ENCODE measurements at regions of chr4 and their contacts with region 1.

Region 1: GRCh38 chr4:86594559-86595425 is 677 bp downstream of the PTPN13 start:
- DNase-seq: no peak
- H3K4me3 Mint-ChIP-seq: peak overlapping the region; percentile 69
- H3K27ac Mint-ChIP-seq: no peak overlapping the region
- H3K4me1 Mint-ChIP-seq: peaks cover 14% of the 10 kb centered on the region
- H3K27me3 Mint-ChIP-seq: peaks cover 52% of the 10 kb centered on the region

Region 2: GRCh38 chr4:86497980-86498862 is 96.6 kb before region 1 on chr4:
- intact Hi-C with region 1: loop called (anchors 5 kb)
- DNase-seq: no peak
- H3K4me3 Mint-ChIP-seq: no peak overlapping the region
- H3K27ac Mint-ChIP-seq: no peak overlapping the region
- H3K4me1 Mint-ChIP-seq: peaks cover 9% of the 10 kb centered on the region
- H3K27me3 Mint-ChIP-seq: peaks cover 13% of the 10 kb centered on the region

Region 3: GRCh38 chr4:86626066-86626465 is 31.3 kb after region 1 on chr4:
- intact Hi-C with region 1: no loop called
- DNase-seq: no peak
- H3K4me3 Mint-ChIP-seq: no peak overlapping the region
- H3K27ac Mint-ChIP-seq: no peak overlapping the region
- H3K4me1 Mint-ChIP-seq: no peaks in the 10 kb centered on the region
- H3K27me3 Mint-ChIP-seq: peaks cover 5% of the 10 kb centered on the region

Measured in activated T-helper 2 cell treated with anti-CD3 and anti-CD28 coated beads, Interferon-gamma antibody, Interleukin-2, Interleukin-4, amounts not matched to agents 10 μg/mL and 5 μg/mL and 100 μg/mL, durations not matched to agents 14 hours and 24 hours and 36 hours (primary cell).